Mammary epithelial cell (primary cell): ENCODE measurements at regions of chr5 and their contacts with region 1.

Region 1: DNA sequence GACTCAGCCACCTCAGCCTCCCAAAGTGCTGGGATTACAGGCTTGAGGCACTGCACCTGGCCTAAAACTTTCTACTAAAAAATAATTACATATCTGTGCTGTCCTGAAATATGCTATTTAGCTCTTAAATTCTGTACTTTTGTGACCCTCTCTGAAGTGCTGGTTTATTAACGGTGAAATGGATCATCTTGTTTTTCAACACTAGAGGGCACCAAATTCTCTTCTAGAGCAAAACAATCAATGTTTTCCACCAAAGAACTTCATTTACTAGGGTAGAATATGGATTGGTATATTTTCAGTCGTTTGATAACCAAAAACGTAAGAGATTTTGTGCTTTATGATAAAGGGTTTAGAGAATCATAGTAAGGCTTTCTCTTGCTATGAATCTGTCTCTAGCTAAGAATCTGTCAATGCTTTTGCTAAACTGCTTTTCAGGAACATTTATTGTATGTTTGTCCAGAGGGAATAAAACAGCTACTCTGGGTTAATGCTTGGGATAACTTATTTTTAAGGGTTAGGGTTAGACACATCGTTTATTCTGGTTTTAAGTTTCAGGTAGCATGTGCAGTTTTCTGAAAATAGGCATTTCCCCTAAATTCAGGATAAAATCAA is 63.6 kb downstream of the RNF180 start:
- DNase-seq: peak; percentile 15
- H3K4me3 ChIP-seq: no peak overlapping the region
- H3K27ac ChIP-seq: no peak overlapping the region
- H3K4me1 ChIP-seq: no peaks in the 10 kb centered on the region
- H3K27me3 ChIP-seq: no peaks in the 10 kb centered on the region
- CTCF ChIP-seq: peak; percentile 53 to 65

Region 2: GRCh38 chr5:64323591-64323990 is 94.3 kb after region 1 on chr5:
- CTCF ChIA-PET with region 1: no interaction called
- dilution Hi-C with region 1: no loop called
- in situ Hi-C with region 1: no loop called
- intact Hi-C with region 1: no loop called
- DNase-seq: no peak
- H3K4me3 ChIP-seq: no peak overlapping the region
- H3K27ac ChIP-seq: no peak overlapping the region
- H3K4me1 ChIP-seq: no peaks in the 10 kb centered on the region
- H3K27me3 ChIP-seq: no peaks in the 10 kb centered on the region
- CTCF ChIP-seq: no peak

Region 3: DNA sequence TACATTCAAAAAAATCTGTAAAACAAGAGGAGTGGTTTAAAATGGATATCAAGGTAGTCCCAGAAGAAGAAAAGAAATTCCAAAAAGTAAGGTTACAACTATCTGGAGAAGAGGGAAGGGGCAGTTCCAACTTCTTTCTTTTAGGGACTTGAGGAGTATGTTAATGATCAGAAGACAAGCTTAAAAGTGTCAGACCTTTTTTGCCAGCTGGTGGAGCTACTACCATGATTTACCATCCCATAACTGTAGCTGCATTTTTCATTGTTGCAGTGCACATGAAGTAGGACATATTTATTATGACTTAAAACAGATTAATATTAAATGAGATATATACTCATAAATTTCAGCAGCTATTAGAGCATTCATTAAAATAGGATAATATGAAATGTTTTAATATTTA is 118.0 kb after region 1 on chr5:
- CTCF ChIA-PET with region 1: no interaction called
- dilution Hi-C with region 1: no loop called
- in situ Hi-C with region 1: no loop called
- intact Hi-C with region 1: loop called (anchors 5 kb)
- DNase-seq: no peak
- H3K4me3 ChIP-seq: no peak overlapping the region
- H3K27ac ChIP-seq: no peak overlapping the region
- H3K4me1 ChIP-seq: no peaks in the 10 kb centered on the region
- H3K27me3 ChIP-seq: no peaks in the 10 kb centered on the region
- CTCF ChIP-seq: peak in 1 of 2 donors; percentile 32

Region 4: DNA sequence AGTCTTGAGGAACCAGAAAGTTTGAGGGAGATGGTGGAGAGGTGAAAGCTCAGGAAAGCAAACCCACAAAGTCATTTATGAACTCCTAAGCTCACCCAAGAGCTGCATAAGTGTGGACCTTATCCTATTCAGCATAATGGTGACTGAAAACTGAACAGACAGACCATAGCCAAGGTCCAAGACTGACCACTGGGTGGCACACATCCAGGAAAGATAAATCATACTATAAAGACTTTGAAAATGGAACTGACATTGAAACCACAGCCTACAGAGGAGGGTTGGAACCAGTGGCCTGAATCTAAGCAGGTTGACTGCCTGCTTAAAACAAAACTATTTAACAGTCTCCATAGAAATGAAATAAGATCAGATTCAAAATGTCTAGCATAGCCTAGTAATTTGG is 155.5 kb after region 1 on chr5:
- CTCF ChIA-PET with region 1: no interaction called
- dilution Hi-C with region 1: no loop called
- in situ Hi-C with region 1: no loop called
- intact Hi-C with region 1: loop called (anchors 10 kb)
- DNase-seq: peak; percentile 4
- H3K4me3 ChIP-seq: no peak overlapping the region
- H3K27ac ChIP-seq: no peak overlapping the region
- H3K4me1 ChIP-seq: no peaks in the 10 kb centered on the region
- H3K27me3 ChIP-seq: no peaks in the 10 kb centered on the region
- CTCF ChIP-seq: peak in 1 of 2 donors; percentile 36

Region 5: DNA sequence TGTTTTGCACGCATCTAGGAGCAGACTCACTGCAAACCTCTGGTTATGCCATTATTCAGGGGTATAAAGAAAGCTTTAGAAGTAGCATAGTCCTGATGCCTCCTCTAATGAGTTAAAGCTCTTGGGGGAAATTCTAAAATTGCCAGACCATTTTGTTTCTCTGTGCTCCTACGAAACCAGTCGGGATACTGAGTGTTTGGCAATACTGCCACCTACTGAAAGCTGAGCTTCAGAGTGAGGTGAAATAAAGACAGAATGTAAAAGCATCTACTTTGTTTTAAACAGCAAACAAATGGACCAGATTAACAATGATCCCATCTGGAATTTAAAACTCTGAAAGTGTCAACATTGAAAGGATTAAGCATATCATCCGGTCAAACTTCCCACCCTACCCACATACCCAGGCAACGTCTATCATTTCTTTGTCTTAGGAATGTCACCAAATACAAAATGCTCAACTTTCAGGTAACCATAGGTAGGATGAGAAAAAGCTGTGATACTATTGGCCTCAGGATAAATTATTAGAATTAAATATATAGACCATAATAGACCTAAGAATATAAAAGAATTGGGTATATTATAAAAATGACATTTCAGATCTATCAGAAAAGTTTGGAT is 383.2 kb after region 1 on chr5:
- CTCF ChIA-PET with region 1: interaction called, 9 read pairs
- dilution Hi-C with region 1: no loop called
- in situ Hi-C with region 1: loop called (anchors 5 to 10 kb)
- intact Hi-C with region 1: loop called (anchors 1 kb)
- DNase-seq: peak; percentile 56
- H3K4me3 ChIP-seq: no peak overlapping the region
- H3K27ac ChIP-seq: no peak overlapping the region
- H3K4me1 ChIP-seq: no peaks in the 10 kb centered on the region
- H3K27me3 ChIP-seq: peaks cover 6% of the 10 kb centered on the region
- CTCF ChIP-seq: peak; percentile 69 to 87

Region 6: DNA sequence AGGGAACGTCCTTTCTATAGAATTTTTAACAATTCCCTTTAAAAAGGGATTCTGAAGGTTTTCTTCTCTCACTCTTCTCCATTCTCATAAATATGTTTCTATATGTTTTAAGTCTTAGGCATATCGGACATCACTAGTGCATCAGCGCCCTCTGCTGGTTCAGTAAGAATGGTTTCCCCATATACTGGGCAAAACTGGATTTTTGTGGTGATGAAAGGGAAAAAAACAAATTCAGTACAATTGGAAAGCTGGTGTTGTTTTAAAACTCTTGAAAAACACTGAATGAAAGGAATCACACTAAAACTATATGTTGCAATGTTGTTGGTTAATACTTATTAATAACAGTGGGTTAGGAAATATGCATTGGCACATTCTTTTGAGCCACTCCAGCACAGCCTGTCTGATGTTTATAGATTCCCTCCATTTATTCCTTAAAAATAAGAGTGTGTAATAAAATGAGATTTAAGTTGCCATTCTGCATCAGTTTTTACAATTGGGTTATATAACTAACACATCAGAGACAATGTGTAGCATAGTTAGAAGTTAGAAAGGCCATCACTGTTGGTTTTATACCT is 555.3 kb after region 1 on chr5:
- CTCF ChIA-PET with region 1: no interaction called
- dilution Hi-C with region 1: no loop called
- in situ Hi-C with region 1: no loop called
- intact Hi-C with region 1: loop called (anchors 10 kb)
- DNase-seq: peak; percentile 55
- H3K4me3 ChIP-seq: no peak overlapping the region
- H3K27ac ChIP-seq: no peak overlapping the region
- H3K4me1 ChIP-seq: no peaks in the 10 kb centered on the region
- H3K27me3 ChIP-seq: no peaks in the 10 kb centered on the region
- CTCF ChIP-seq: peak; percentile 76 to 81